Heart right ventricle (tissue), 16 donors: ENCODE measurements at regions of chr6 and their contacts with region 1.

Region 1: GRCh38 chr6:80959034-80959433 is 793.4 kb downstream of the TENT5A start:
- DNase-seq: no peak
- ATAC-seq: peak in 1 of 8 donors; percentile 66
- H3K4me3 ChIP-seq: no peak overlapping the region
- H3K27ac ChIP-seq: no peak overlapping the region
- H3K4me1 ChIP-seq: peaks cover 0 to 17% (median 0%) of the 10 kb centered on the region in 9 donors
- H3K27me3 ChIP-seq: no peaks in the 10 kb centered on the region
- CTCF ChIP-seq: no peak

Region 2: DNA sequence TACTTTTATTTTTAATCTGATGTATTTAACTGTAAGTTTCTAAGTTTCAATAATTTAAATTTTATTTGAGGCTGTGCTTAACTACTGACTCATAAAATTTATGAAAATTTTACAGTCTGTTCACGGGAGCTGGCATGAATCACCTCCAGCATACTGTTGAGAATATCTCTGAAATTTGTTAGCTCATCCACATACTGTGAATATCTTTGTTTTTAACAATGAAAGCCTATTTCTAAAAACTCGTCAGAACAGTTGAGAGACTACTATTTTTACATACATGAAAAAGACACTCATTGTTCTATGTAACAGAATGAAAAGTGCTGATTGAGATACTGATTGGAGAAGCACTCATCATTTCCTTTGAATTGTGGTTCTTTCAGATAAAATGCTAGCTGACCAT is 44.1 kb after region 1 on chr6:
- intact Hi-C with region 1: loop called in 1 of 10 experiments (anchors 2 kb)
- DNase-seq: no peak
- ATAC-seq: no peak
- H3K4me3 ChIP-seq: no peak overlapping the region
- H3K27ac ChIP-seq: no peak overlapping the region
- H3K4me1 ChIP-seq: no peaks in the 10 kb centered on the region
- H3K27me3 ChIP-seq: no peaks in the 10 kb centered on the region
- CTCF ChIP-seq: no peak